Breast epithelium (tissue), 4 donors: ENCODE measurements at regions of chr11 and their contacts with region 1.

Region 1: GRCh38 chr11:128757235-128757711 is 63.4 kb downstream of the FLI1 start:
- DNase-seq: no peak
- H3K4me3 ChIP-seq: no peak overlapping the region
- H3K27ac ChIP-seq: peak overlapping the region in 1 of 2 donors; percentile 20
- H3K4me1 ChIP-seq: no peaks in the 10 kb centered on the region
- H3K27me3 ChIP-seq: peaks cover 0 to 5% of the 10 kb centered on the region in 2 donors
- CTCF ChIP-seq: no peak
- POLR2A ChIP-seq: no peak

Region 2: DNA sequence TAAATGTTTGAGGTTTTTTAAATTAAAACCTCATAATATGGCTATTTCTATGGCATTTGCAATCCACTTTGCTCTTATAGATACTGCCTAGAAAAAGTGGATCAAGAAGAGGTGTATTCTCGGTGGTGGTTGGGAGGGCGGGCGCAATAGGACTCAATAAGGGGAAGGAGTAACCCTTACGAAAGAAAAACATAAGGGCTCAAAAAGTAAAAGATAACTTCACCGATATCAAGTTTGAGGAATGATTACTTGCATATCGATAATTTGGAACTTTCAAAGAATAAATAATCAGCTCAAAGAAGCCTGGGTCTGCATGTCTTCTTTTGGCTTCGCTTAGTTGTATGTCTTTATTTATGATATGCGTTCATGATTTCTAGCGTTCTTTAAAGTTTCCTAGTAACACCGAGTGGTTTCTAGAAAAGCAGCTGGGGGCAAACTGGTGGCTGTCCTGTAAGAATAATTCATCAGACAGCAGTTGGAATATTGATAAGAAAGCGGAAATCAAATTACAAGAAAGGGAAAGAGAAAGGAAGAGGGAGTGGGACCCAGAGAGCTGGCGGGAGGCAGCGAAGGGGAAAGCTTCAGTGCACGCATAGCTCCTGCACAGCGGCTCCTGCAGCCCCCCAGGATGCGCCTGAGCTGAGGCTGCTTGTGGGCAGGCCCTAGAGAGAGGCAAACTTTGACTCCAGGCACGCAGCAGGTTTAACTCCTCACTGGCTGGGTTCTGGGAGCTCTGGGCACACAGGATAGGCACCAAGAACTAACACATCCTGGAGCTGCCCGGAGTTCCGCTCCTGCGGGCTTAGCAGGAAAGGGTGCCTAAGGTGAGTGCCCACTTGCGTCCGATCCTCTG is 72.5 kb before region 1 on chr11:
- intact Hi-C with region 1: loop called (anchors 5 kb)
- DNase-seq: no peak
- H3K4me3 ChIP-seq: peak overlapping the region in 2 of 3 donors; percentile 9 to 19
- H3K27ac ChIP-seq: no peak overlapping the region
- H3K4me1 ChIP-seq: peaks cover 4 to 5% of the 10 kb centered on the region in 2 donors
- H3K27me3 ChIP-seq: peaks cover 0 to 71% of the 10 kb centered on the region in 2 donors
- CTCF ChIP-seq: no peak
- POLR2A ChIP-seq: no peak